Right ventricle myocardium inferior (tissue), 1 donor: ENCODE measurements at regions of chr11 and their contacts with region 1.

Region 1: GRCh38 chr11:129743111-129743815 is 72.4 kb upstream of the TMEM45B start:
- DNase-seq: no peak
- ATAC-seq: peak; percentile 10

Region 2: DNA sequence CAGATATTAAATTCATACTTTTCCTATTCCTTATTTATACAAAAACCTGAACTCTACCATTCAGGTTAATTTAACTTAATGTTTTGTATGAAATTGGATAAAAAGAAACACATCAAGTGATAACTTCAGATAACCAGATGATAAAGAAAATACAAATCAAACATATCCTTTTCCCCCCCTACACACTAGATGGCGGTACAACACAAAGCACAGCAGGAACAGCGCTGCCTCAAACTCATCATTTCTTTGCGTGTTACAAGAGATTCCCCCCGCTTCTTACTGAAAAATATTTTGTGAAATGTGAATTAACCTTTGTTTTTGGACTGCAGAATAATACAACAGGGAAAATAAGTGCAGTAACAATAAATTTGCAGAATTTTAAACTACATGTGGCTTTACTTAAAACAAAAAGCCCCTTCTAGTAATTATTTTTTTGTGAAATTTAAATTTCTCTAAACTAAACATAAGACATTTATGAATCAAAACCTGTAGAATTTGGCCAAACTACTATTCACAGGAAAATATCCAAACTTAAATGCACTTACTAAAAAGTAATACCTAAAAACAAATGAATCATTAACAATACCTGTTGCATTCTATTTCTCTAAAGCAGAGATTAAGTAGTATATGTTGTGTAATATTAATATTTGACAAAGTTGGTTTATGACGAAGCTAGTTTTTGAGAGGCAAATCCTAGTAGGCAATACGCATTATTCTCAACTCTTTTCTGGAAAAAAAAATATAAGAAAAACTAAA is 625.5 kb before region 1 on chr11:
- intact Hi-C with region 1: loop called (anchors 10 kb)
- DNase-seq: no peak
- ATAC-seq: no peak

Region 3: GRCh38 chr11:129331871-129332274 is 411.4 kb before region 1 on chr11:
- intact Hi-C with region 1: no loop called
- DNase-seq: peak; percentile 89
- ATAC-seq: peak; percentile 92